Activated T-helper 1 cell treated with anti-CD3 and anti-CD28 coated beads, Interleukin-12 subunit alpha, Interleukin-12 subunit beta, Interleukin-2, Interleukin-4 antibody, amounts not matched to agents 30 ng/mL and 10 ng/mL and 1 ng/mL, durations not matched to agents 14 hours and 24 hours and 36 hours (primary cell): ENCODE measurements at regions of chr5 and their contacts with region 1.

Region 1: DNA sequence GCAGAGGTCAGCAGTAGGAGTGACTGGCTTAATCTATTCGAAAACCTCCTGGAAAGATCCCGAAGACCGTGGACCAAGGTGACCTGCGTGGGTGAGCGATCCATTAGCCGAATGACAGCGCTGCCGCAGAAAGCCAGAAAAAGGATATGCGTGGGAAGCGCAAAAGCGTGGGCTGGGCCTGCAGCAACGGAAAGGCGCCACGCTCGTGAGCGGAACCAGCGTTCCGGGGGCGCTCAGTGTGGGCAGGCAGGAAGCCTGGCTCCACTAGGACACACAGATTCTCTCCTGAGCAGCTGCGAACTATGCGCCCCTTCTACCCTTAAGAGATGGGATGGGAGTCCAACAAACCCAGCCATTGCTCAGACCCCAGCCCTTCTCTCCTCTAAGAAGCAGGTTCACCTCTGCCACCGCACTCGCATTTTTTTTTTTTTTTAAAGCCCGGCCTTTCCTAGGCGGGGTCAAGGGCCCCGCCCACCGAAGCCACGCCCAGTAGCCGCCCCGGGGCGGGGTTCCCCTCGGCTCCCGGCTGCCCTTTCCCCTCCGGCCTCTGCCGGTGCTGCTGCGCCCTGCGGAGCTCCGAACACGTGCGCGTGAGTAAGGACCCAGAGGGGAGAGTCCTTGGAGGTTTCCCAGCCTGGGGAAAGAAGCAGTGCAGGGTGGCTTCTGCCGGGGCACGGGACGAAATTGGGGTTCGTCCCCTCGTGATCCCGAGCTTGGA is 19.8 kb upstream of the MATR3 start:
- DNase-seq: peak; percentile 85
- H3K4me3 Mint-ChIP-seq: peak overlapping the region; percentile 96
- H3K27ac Mint-ChIP-seq: peak overlapping the region; percentile 82
- H3K4me1 Mint-ChIP-seq: peaks cover 50% of the 10 kb centered on the region
- H3K27me3 Mint-ChIP-seq: peaks cover 9% of the 10 kb centered on the region

Region 2: GRCh38 chr5:138752951-138753793 is 520.6 kb before region 1 on chr5 and contains the start of gene CTNNA1:
- intact Hi-C with region 1: loop called (anchors 5 kb)
- DNase-seq: peak; percentile 48
- H3K4me3 Mint-ChIP-seq: peak within 1 kb of the TSS; percentile 86
- H3K27ac Mint-ChIP-seq: peak within 1 kb of the TSS; percentile 56
- H3K4me1 Mint-ChIP-seq: peaks cover 37% of the 10 kb centered on the region
- H3K27me3 Mint-ChIP-seq: peaks cover 22% of the 10 kb centered on the region
- total RNA-seq, gene CTNNA1: 56.6 and 58.0 TPM in 2 replicates

Region 3: DNA sequence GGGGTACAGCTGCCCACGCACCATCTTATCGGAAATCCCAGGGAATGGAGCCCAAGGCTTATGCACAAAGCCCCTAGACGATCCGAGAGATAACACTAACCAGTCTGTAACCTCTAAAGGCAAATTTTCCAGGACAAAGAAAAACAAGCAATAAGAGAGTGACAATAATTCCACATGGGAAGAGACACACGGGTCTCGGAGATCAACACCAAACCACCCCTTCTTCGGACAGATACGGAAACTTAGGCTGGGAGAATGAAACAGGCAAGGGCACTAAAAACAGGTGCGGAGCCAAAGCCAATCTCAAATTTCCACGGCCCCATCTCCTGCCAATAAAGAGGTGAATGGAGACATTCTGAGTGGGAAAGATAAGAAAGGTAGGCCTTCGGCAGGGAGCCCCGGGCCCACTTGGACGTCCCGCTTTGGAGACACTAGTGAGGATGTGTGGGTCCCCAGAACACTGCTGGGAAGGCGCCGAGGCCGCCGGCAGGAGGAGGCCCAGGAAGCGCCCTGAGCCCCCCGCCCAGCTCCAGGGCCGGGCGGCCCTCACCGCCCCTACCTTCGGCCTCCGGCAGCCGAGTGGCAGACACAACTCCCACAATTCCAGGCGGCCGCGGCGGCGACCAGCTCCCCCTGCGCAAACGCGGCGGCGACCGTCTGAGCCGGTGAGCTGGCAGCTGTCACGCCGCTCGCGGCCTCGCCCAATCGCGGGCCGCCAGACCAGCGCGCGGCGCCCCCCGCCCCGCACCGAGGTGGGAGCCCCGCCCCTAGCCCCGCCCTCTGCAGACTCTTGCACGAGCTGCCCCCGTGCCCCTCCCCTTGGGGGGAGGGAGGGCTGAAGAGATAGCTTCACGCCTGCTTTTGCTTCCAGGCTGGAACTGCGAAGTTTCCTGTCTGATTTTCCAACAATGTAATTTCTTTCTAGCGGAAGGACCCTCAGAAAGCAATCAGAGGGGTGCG is 75.7 kb before region 1 on chr5 and contains the start of gene SIL1:
- intact Hi-C with region 1: loop called (anchors 1 kb)
- DNase-seq: peak; percentile 94
- H3K4me3 Mint-ChIP-seq: peak within 1 kb of the TSS; percentile 90
- H3K27ac Mint-ChIP-seq: peak within 1 kb of the TSS; percentile 89
- H3K4me1 Mint-ChIP-seq: peaks cover 32% of the 10 kb centered on the region
- H3K27me3 Mint-ChIP-seq: no peaks in the 10 kb centered on the region
- total RNA-seq, gene SIL1: 28.6 and 41.1 TPM in 2 replicates

Region 4: DNA sequence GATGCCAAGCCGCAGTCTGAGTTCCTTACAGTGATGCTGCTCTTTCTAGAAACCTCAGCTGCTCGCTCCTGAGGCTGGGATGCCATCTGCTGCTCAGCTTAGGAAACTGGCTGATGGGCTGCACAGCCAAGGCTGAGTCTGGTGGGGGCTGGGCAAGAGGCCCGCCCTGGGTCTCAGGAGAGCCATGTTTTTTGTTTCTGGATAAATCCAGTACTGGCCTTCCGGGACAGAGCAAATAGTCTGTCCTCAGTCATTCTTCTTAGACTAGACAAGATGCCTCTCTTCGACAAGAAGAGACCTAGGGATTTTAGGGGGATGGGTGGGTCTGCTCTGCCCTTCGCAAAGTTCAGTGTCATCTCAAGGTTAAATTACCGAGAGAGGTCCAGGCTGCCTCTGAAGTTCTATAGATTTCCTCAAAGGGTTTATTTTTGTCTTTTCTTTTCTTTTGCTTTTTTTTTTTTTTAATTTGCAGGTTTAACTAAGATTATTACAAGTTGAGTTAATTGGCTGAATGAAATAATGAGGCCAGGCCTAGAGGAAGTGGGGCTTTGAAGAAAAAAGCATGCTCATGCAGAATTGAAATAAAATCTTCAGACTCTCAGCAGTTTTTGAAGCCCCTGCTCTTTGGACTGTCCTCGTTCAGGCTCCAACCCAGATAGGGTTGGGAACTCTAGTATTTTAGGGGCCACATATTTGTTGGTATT is 10.8 kb before region 1 on chr5:
- intact Hi-C with region 1: loop called (anchors 1 kb)
- DNase-seq: peak; percentile 38
- H3K4me3 Mint-ChIP-seq: no peak overlapping the region
- H3K27ac Mint-ChIP-seq: no peak overlapping the region
- H3K4me1 Mint-ChIP-seq: peaks cover 4% of the 10 kb centered on the region
- H3K27me3 Mint-ChIP-seq: peaks cover 28% of the 10 kb centered on the region

Region 5: GRCh38 chr5:139341650-139342422 is 68.1 kb after region 1 on chr5 and contains the start of gene PAIP2:
- intact Hi-C with region 1: loop called (anchors 1 kb)
- DNase-seq: peak; percentile 95
- H3K4me3 Mint-ChIP-seq: peak within 1 kb of the TSS; percentile 94
- H3K27ac Mint-ChIP-seq: peak within 1 kb of the TSS; percentile 95
- H3K4me1 Mint-ChIP-seq: peaks cover 46% of the 10 kb centered on the region
- H3K27me3 Mint-ChIP-seq: no peaks in the 10 kb centered on the region
- total RNA-seq, gene PAIP2: 88.4 and 97.3 TPM in 2 replicates